Panc1 (cell line): ENCODE measurements at regions of chr12 and their contacts with region 1.

Region 1: DNA sequence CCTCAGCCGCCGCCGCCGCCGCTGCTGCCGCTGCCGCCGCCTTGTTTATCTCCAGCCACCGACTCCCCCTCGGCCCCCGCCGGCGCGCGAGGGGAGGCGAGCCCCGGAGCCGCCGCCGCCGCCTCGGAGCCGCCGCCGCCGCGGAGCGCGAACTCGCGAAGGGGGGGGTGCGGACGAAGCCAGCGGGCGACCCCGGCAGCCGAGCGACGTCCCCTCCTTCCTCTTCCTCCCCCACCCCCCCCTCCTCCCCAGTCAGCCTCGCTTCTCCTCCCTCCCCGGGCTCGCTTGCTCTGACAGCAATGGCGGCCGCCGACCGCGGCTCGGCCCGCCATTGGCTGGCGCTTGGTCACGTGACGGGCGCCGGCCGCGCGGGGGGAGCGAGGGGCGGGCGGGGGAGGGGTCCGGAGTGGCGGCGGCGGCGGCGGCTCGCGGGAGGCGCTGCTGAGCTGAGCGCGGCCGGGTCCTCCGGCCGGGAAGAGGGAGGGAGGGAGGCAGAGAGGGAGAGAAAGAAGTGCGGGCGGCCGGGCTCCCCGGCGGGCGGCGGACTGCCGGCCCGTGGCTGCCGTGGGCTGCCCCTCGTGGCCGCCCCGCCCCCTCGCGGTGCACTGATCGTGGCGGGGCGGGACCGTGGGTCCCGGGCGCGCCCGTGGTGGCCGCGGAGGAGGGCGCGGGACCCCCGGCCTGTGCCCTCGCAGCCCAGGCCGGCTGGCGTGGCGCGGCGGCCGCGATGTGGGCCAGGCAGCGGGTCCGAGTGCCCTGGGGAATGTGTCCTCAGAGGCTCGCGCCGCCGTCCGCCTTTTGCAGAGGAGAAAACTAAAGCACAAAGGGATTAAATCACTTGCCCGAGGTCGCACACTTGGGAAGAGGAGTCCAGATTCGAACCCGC is at the start of gene MED13L:
- DNase-seq: no peak
- ATAC-seq: peak; percentile 88
- H3K4me3 ChIP-seq: peak within 1 kb of the TSS; percentile 66 to 75
- H3K27ac ChIP-seq: peak within 1 kb of the TSS; percentile 98
- H3K4me1 ChIP-seq: peaks cover 53% of the 10 kb centered on the region
- H3K27me3 ChIP-seq: no peaks in the 10 kb centered on the region
- CTCF ChIP-seq: peak; percentile 84
- total RNA-seq, gene MED13L: 170 TPM

Region 2: DNA sequence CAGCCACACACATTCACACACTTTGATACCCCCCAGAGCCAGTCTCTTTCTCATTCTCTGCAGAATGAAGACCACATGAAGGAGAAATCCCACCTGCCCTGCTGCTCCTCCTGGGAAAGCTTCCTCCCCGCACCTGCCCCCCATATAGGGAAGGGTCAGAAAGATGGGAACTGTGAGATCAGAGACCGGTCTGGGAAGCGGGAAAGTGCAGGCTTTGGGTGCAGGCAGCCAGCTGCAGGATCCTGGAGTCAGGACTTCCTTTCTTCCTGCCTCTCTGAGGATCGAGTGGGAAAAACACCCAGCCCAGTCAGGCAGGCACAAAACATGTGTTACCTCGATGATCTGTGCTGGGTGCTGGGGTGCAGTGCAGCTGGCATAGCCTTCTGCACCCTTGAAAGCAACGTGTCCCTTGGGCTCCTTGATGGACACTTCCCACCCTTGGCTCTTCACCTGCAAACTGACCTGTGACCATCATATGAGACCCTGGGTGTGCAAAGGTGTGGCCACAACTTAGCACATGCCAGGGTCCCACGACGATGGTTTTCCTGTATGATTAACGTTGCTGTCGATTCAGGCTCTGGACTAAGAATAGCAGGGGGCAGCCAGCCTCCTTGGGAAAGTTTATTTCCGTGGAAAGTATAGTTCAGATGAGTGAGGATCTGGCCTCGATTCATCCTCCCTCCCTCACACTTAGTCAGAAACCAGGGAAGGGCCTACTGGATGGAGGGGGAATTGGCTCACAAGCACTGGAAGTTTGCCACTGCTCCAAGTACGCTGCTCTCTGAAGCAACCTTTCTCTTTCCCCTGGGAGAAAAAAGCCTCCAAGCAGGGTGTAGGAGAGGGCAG is 105.3 kb after region 1 on chr12:
- CTCF ChIA-PET with region 1: no interaction called
- POLR2A ChIA-PET with region 1: no interaction called
- in situ Hi-C with region 1: no loop called
- intact Hi-C with region 1: loop called (anchors 5 kb)
- DNase-seq: no peak
- ATAC-seq: peak; percentile 46
- H3K4me3 ChIP-seq: no peak overlapping the region
- H3K27ac ChIP-seq: peak overlapping the region; percentile 88
- H3K4me1 ChIP-seq: peaks cover 39% of the 10 kb centered on the region
- H3K27me3 ChIP-seq: no peaks in the 10 kb centered on the region
- CTCF ChIP-seq: no peak

Region 3: GRCh38 chr12:116525418-116526001 is 247.9 kb after region 1 on chr12:
- CTCF ChIA-PET with region 1: no interaction called
- POLR2A ChIA-PET with region 1: no interaction called
- in situ Hi-C with region 1: no loop called
- intact Hi-C with region 1: loop called (anchors 5 kb)
- DNase-seq: no peak
- ATAC-seq: peak; percentile 89
- H3K4me3 ChIP-seq: peak overlapping the region; percentile 3 to 39; a peak in 3 of 4 replicates
- H3K27ac ChIP-seq: peak overlapping the region; percentile 92
- H3K4me1 ChIP-seq: peaks cover 62% of the 10 kb centered on the region
- H3K27me3 ChIP-seq: no peaks in the 10 kb centered on the region
- CTCF ChIP-seq: no peak

Region 4: DNA sequence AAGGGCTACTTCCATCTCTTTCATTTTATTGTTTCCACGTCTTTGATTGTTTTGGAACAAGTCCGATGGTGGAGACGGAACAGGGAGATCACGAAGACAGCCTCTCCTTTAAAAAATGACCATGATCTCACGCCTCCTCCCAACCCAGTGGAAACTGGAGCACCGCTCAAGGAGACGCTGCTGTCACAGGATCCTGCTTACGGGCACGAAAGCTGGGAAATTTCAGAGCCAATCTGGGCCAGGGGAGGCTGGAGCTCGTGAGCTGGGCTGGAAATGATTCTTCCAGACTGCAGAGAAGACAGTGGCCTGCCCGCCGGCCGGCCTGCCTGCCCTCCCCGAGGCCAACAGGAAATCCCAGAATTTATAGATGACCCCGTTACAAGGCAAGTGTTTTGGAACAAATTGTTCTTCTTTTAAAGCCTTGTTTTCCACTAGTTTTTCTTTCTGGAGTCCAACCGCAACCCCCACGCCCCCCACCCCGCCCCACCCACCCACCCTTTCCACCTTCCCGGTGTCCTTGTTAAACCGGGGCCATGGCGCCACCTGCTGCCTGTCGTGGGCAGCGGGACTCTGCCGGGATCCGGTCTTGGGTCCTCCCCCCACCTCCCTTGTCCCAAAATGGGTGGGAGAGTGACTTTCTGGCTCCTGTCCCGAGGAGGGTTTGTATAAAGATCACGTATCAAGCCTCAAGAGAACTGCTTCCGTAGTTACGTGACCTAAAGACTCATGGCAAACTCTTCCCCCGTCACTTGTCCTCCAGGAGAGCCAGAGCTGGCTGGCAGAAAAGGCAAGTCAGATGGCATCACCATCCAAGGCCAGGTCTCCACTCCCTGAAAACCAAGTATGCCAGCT is 321.9 kb after region 1 on chr12:
- CTCF ChIA-PET with region 1: no interaction called
- POLR2A ChIA-PET with region 1: interaction called, 5 read pairs
- in situ Hi-C with region 1: no loop called
- intact Hi-C with region 1: loop called (anchors 5 kb)
- DNase-seq: no peak
- ATAC-seq: peak; percentile 89
- H3K4me3 ChIP-seq: peak overlapping the region in 1 of 2 experiments; percentile 26; a peak in 1 of 4 replicates
- H3K27ac ChIP-seq: peak overlapping the region; percentile 72
- H3K4me1 ChIP-seq: peaks cover 28% of the 10 kb centered on the region
- H3K27me3 ChIP-seq: no peaks in the 10 kb centered on the region
- CTCF ChIP-seq: peak; percentile 81